Activated CD4-positive, alpha-beta T cell treated with anti-CD3 and anti-CD28 coated beads, Interleukin-2, amount 10 ng/mL, durations not matched to agents 24 days and 14 days (primary cell): ENCODE measurements at regions of chr11 and their contacts with region 1.

Region 1: GRCh38 chr11:71928737-71929452 is at the start of gene RNF121:
- DNase-seq: peak; percentile 99
- H3K4me3 Mint-ChIP-seq: peak within 1 kb of the TSS; percentile 100
- H3K27ac Mint-ChIP-seq: peak within 1 kb of the TSS; percentile 99
- H3K4me1 Mint-ChIP-seq: peaks cover 41% of the 10 kb centered on the region
- H3K27me3 Mint-ChIP-seq: no peaks in the 10 kb centered on the region
- total RNA-seq, gene RNF121: 56.4 and 65.4 TPM in 2 replicates

Region 2: DNA sequence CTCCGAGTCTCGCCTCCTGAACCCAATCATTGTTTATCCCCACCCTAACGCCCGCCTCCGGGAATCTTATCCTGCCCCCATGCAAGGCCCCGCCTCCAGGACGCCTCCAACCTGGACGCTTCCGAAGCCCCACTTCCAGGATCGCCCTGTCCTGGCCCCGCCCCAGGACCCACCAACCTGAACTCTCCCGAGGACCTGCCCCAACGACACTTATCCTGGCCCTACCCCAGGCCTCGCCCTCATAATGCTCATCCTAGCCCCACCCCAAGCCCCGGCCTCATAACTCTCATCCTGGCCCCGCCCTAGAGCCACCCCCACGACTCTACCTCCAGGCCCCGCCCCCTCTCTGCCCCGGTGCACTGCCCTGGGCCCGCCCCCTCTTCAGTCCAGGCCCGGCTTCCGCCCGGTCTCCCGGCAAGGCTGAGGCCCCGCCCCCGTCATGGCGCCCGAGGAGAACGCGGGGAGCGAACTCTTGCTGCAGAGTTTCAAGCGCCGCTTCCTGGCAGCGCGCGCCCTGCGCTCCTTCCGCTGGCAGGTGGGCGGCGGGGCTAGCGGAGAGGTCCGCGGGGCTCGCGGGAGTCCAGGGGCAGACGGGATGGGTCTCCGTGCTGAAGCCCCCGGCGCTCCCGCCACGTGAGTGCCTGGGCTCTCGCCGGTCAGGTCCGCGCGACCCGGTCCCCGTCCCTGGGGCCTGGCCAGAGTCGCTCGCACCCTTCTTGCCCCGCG is 141.6 kb before region 1 on chr11:
- intact Hi-C with region 1: loop called (anchors 1 kb)
- DNase-seq: peak; percentile 98
- H3K4me3 Mint-ChIP-seq: peak overlapping the region; percentile 91
- H3K27ac Mint-ChIP-seq: peak overlapping the region; percentile 91
- H3K4me1 Mint-ChIP-seq: peaks cover 16% of the 10 kb centered on the region
- H3K27me3 Mint-ChIP-seq: no peaks in the 10 kb centered on the region

Region 3: DNA sequence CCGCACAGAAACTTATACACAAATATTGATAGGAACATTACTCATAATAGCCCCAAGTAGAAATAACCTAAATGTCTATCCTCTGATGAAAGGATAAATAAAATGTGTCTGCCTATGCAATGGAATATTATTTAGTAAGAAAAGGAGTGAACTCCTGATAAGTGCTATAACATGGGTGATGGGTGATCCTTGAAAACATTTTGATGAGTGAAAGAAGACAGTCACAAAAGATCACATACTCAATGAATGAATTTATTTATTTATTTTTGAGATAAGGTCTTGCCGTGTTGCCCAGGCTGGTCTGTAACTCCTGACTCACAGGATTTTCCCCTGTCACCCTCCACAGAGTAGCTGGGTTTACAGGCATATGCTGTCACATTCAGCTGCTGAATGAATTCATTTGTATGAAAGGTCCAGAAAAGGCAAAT is 17.3 kb after region 1 on chr11:
- intact Hi-C with region 1: loop called (anchors 1 kb)
- DNase-seq: no peak
- H3K4me3 Mint-ChIP-seq: no peak overlapping the region
- H3K27ac Mint-ChIP-seq: peak overlapping the region; percentile 73
- H3K4me1 Mint-ChIP-seq: peaks cover 18% of the 10 kb centered on the region
- H3K27me3 Mint-ChIP-seq: no peaks in the 10 kb centered on the region

Region 4: DNA sequence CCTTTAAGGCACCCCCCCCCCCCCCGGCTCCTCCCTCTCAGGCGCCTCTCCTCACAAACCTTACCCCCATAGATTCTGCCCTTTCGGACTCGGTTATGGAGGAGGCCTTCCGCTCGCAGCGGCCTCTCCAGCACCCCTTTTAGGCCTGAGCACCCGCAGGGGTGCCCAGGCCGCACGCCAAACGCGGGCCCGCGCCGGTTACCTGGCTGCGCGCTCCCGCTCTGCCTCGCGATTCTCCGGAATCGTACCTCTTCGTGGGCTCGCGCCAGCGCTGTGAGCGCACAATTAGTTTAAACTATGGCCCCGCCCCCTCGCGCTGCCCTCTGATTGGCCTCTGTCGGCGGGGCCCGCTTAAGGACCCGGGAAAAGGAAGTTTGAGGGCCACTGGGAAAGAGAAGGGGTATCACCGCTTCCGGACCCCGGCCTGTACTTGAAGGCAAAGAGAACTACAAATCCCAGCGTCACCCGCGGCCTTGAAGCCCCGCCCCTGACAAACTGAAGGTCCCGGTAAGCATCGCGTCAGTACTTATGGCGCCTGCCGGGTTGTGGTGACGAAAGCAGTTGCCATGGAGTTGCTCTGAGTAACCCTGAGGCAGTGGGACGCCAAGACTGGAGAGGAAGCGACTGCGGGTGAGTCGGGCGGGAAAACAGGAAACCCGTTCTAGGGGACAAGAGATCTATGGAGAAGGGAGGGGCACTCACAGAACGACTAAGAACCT is 151.5 kb after region 1 on chr11 and contains the starts of genes LRRC51 and NUMA1:
- intact Hi-C with region 1: loop called (anchors 1 kb)
- DNase-seq: peak; percentile 100
- H3K4me3 Mint-ChIP-seq: peak within 1 kb of the TSS; percentile 96
- H3K27ac Mint-ChIP-seq: peak within 1 kb of the TSS; percentile 94
- H3K4me1 Mint-ChIP-seq: peaks cover 46% of the 10 kb centered on the region
- H3K27me3 Mint-ChIP-seq: no peaks in the 10 kb centered on the region
- total RNA-seq, gene LRRC51: 7.0 and 7.1 TPM in 2 replicates
- total RNA-seq, gene NUMA1: 138 and 149 TPM in 2 replicates

Region 5: GRCh38 chr11:72112321-72113219 is 183.7 kb after region 1 on chr11 and contains the start of gene ANAPC15:
- intact Hi-C with region 1: loop called (anchors 1 kb)
- DNase-seq: peak; percentile 100
- H3K4me3 Mint-ChIP-seq: peak within 1 kb of the TSS; percentile 98
- H3K27ac Mint-ChIP-seq: peak within 1 kb of the TSS; percentile 99
- H3K4me1 Mint-ChIP-seq: peaks cover 18% of the 10 kb centered on the region
- H3K27me3 Mint-ChIP-seq: no peaks in the 10 kb centered on the region
- total RNA-seq, gene ANAPC15: 52.1 and 54.9 TPM in 2 replicates